Activated CD4-positive, alpha-beta memory T cell treated with anti-CD3 and anti-CD28 coated beads, Interleukin-2, amount 10 ng/mL, durations not matched to agents 7 days and 5 days (primary cell): ENCODE measurements at regions of chr19 and their contacts with region 1.

Region 1: GRCh38 chr19:47186446-47187334 is 44.3 kb downstream of the BBC3 start:
- DNase-seq: peak; percentile 77
- H3K4me3 Mint-ChIP-seq: peak overlapping the region; percentile 28
- H3K27ac Mint-ChIP-seq: peak overlapping the region; percentile 90
- H3K4me1 Mint-ChIP-seq: peaks cover 79% of the 10 kb centered on the region
- H3K27me3 Mint-ChIP-seq: no peaks in the 10 kb centered on the region

Region 2: GRCh38 chr19:47058621-47059020 is 128.1 kb before region 1 on chr19:
- CTCF ChIA-PET with region 1: no interaction called
- POLR2A ChIA-PET with region 1: no interaction called
- DNase-seq: no peak
- H3K4me3 Mint-ChIP-seq: no peak overlapping the region
- H3K27ac Mint-ChIP-seq: no peak overlapping the region
- H3K4me1 Mint-ChIP-seq: no peaks in the 10 kb centered on the region
- H3K27me3 Mint-ChIP-seq: peaks cover 9% of the 10 kb centered on the region

Region 3: DNA sequence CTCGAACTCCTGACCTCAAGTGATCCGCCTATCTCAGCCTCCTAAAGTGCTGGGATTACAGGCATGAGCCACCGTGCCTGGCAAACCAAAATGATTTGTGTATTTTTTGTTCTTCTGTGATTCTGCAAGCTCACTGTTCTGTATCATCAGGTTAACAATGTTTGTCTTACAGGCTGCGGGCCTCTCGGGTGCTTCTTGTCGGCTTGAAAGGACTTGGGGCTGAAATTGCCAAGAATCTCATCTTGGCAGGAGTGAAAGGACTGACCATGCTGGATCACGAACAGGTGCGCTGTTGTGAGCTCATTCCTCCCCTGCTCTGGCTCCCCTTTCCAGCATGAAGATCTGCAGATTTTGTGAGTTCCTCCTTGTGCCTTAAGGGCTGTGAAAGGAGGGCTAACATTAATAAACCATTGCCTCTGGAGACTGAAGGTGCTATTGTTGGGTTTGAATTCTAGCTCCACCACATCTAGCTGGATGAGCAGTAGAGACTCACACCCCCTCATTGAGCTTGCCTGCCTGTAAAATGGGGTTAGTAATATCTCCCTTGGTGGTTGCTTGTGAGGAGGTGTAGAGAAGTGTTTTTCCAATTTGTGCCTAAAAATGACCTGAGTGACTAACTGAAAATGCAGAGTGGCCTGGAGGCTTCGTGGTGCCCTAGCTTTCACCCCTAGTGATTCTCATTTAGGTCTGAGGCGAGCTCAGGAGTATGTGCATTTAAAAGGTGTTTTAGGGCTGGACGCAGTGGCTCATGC is 43.2 kb before region 1 on chr19:
- CTCF ChIA-PET with region 1: interaction called, 10 read pairs
- POLR2A ChIA-PET with region 1: interaction called, 10 read pairs
- DNase-seq: no peak
- H3K4me3 Mint-ChIP-seq: no peak overlapping the region
- H3K27ac Mint-ChIP-seq: peak overlapping the region; percentile 21
- H3K4me1 Mint-ChIP-seq: peaks cover 55% of the 10 kb centered on the region
- H3K27me3 Mint-ChIP-seq: no peaks in the 10 kb centered on the region

Region 4: GRCh38 chr19:47152224-47153017 is 34.3 kb before region 1 on chr19:
- CTCF ChIA-PET with region 1: interaction called, 30 read pairs
- POLR2A ChIA-PET with region 1: interaction called, 42 read pairs
- DNase-seq: no peak
- H3K4me3 Mint-ChIP-seq: no peak overlapping the region
- H3K27ac Mint-ChIP-seq: no peak overlapping the region
- H3K4me1 Mint-ChIP-seq: peaks cover 45% of the 10 kb centered on the region
- H3K27me3 Mint-ChIP-seq: no peaks in the 10 kb centered on the region

Region 5: DNA sequence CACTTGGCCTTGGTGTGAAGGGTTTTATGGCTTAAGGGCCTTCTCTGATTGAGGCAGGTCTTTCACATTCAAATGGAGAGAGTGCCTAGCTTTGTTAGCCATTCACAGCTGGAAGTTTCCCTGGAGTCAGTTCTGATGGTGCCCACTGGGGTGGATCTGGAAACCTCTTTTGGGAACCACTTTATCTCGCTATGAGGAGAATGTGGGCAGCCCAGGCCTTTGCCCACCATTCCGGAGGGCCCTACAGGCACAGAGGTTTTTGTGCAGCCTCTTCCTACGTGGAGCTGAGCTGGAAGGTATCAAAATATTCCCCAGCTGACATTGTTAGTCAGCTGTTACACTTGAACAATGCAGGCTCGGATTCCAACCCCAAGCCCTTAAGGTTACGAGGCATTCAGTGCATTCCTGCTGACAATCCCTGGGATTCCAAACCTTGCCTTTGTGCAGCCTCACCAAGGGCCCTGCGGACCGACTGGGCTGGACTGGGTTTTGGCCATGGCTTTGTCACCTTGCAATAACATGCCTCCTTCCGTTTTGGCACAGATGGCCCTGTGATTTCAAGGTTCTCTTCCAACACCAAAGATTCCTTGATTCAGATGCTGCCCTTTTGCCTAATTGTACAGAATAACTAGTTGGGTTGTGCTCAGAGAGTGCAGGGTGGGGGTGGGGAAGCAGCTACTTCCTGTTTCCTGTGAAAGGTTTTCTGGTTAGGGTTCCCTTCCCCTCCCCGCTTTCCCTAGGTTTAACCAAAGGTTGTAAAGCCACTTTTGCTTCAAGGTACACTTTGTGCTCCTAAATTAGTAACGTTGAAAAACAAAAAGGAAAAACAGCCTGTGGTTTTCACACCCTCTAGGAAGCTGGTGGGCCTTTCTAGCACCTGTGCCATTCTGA is 29.0 kb before region 1 on chr19:
- CTCF ChIA-PET with region 1: interaction called, 30 read pairs
- POLR2A ChIA-PET with region 1: interaction called, 42 read pairs
- DNase-seq: peak; percentile 49
- H3K4me3 Mint-ChIP-seq: peak overlapping the region; percentile 0
- H3K27ac Mint-ChIP-seq: peak overlapping the region; percentile 85
- H3K4me1 Mint-ChIP-seq: peaks cover 51% of the 10 kb centered on the region
- H3K27me3 Mint-ChIP-seq: no peaks in the 10 kb centered on the region

Region 6: GRCh38 chr19:47176627-47177090 is 10.0 kb before region 1 on chr19:
- CTCF ChIA-PET with region 1: interaction called, 7 read pairs
- POLR2A ChIA-PET with region 1: interaction called, 20 read pairs
- DNase-seq: peak; percentile 30
- H3K4me3 Mint-ChIP-seq: no peak overlapping the region
- H3K27ac Mint-ChIP-seq: peak overlapping the region; percentile 81
- H3K4me1 Mint-ChIP-seq: peaks cover 57% of the 10 kb centered on the region
- H3K27me3 Mint-ChIP-seq: no peaks in the 10 kb centered on the region

Region 7: DNA sequence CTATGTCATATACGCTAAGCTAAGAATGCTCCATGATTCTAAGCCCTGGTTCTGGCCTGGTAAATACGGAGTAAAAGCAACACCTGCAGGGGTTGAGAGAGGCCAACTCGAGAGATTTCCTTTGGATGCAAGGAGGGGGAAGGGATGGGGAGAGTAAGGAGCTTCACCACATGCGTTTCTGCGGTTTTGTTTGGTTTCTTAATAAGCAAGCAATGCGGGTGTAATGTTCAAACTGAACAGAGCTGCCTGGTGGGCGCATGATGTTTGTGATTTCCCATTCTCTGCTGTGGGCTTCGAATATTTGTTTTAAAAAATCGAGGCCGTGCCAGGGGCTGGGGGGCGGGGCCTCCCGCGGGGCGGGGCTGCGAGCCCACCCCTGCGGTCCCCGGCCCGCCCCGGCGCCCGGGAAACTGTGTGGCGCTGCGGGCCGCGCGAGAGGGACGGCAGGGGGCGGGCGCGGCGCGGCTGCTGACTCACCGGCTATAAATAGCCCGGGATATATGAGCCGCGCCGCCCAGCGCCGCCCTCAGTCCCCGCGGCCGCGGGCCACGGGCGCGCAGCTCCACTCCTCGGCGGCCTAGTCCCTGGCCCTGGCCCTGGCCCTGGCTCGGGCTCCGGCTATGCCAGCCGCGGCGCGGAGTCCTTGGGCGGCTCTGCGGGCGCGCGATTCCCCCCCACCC is 39.2 kb after region 1 on chr19:
- CTCF ChIA-PET with region 1: interaction called, 9 read pairs
- POLR2A ChIA-PET with region 1: interaction called, 20 read pairs
- DNase-seq: peak; percentile 88
- H3K4me3 Mint-ChIP-seq: peak overlapping the region; percentile 79
- H3K27ac Mint-ChIP-seq: peak overlapping the region; percentile 89
- H3K4me1 Mint-ChIP-seq: peaks cover 18% of the 10 kb centered on the region
- H3K27me3 Mint-ChIP-seq: no peaks in the 10 kb centered on the region

Region 8: DNA sequence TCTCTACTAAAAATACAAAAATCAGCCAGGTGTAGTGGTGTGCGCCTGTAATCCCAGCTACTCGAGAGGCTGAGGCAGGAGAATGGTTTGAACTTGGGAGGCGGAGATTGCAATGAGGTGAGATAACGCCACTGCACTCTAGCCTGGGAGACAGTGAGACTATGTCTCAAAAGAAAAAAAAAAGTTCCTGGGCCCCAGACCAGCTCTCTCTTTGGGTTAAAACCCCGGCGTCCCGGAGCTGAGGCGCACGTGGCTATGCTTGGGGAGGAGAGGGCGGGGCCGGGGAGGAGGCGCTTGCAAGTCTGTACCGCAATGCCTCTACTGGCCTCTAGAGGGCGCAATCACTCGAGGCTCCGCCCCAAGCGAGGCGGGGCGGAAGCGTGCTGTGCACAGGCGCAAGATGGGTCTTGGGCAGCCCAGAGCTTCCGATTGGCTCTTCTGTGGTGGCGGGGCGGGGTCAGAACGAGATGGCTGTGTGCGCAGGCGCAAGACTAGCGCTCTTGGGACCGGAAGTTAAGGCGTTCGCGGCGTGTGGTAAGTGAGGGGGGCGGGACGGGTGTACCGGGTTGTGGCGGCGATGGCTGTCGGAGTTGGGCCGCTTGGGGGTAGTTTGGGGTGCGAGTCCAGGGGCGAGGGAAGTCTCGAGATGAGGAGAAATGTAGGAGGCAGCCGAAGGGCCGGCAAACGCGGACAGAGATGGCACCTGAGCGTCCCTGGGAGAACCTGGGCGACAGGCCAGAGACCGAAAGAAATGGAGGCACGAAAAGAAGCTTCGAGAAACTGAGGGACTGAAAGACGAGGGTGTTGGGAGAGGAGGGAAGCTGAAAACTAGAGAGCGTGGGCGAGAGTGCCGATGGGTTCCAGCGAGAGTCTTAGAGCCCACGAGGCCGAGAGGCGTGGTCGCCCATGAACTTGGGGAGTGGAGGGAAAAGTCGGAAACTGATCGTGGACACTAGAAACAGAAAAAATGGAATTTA is 162.4 kb after region 1 on chr19 and contains the start of gene DHX34:
- CTCF ChIA-PET with region 1: no interaction called
- POLR2A ChIA-PET with region 1: no interaction called
- DNase-seq: peak; percentile 99
- H3K4me3 Mint-ChIP-seq: peak within 1 kb of the TSS; percentile 98
- H3K27ac Mint-ChIP-seq: peak within 1 kb of the TSS; percentile 77
- H3K4me1 Mint-ChIP-seq: peaks cover 31% of the 10 kb centered on the region
- H3K27me3 Mint-ChIP-seq: no peaks in the 10 kb centered on the region
- total RNA-seq, gene DHX34: 10.3 to 10.5 TPM